Activated CD4-positive, alpha-beta T cell treated with anti-CD3 and anti-CD28 coated beads, Interleukin-2, amount 10 ng/mL, durations not matched to agents 7 days and 5 days (primary cell): ENCODE measurements at regions of chr2 and their contacts with region 1.

Region 1: DNA sequence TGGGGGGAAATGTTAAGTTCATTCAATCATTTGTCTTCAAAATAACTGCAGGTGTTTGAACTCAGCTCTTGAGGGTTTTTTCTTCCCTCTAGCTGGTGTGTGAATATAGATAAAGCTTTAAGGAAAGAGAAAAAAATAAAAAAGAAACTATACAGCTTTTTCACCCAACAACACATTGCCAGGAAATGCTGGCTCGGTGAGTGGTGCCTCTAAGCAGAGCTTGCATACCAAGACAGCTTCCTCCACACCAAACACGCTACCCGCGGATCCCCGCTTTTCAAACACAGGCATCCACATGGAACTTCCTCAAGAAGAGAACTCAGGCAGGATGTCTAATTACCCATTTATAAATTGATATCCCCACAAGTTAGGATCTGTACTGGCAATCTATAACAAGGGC is 69.8 kb upstream of the TANK start:
- DNase-seq: peak; percentile 66
- H3K4me3 Mint-ChIP-seq: peak overlapping the region; percentile 38
- H3K27ac Mint-ChIP-seq: peak overlapping the region; percentile 88
- H3K4me1 Mint-ChIP-seq: peaks cover 50% of the 10 kb centered on the region
- H3K27me3 Mint-ChIP-seq: no peaks in the 10 kb centered on the region

Region 2: GRCh38 chr2:161104054-161104553 is 13.7 kb after region 1 on chr2:
- CTCF ChIA-PET with region 1: interaction called, 14 read pairs
- POLR2A ChIA-PET with region 1: interaction called, 3 read pairs
- DNase-seq: no peak
- H3K4me3 Mint-ChIP-seq: no peak overlapping the region
- H3K27ac Mint-ChIP-seq: no peak overlapping the region
- H3K4me1 Mint-ChIP-seq: peaks cover 16% of the 10 kb centered on the region
- H3K27me3 Mint-ChIP-seq: no peaks in the 10 kb centered on the region